Vagina (tissue), 2 donors: ENCODE measurements at regions of chr1 and their contacts with region 1.

Region 1: DNA sequence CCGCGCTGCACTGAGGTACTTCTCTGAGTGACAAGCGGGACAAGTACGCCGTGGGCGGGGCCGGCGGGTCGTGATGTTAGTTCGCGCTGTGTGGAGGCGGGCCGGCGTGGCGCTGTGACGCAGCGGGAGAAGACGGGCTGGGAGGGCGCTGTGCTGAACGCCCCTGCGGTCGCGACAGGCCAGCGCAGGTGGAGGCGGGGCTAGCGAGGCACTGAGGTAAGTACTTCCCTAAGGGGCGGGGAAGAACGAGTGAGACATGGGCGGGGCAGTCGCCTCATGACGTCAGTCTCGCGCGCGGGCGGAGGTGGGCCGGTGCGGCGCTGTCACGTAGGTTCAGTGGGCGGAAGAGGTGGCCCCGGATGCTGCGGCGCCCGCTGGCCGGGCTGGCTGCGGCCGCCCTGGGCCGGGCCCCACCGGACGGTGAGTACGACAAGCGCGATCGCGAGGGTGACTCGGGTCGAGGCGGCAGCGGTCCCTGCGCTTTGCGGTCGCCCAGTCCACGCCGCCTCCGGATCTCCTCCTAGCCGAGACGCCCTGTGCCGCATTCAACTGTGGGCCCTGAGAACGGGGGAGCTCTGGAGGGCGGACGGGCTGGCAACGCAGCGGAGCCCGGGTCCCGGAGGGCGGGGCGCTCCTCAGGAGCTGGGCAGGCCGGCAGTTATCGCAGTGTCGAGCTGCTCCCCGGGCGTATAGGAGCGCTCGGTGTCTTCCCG is at the start of gene GUK1:
- DNase-seq: peak; percentile 100
- H3K4me3 ChIP-seq: peak within 1 kb of the TSS; percentile 78 to 89
- H3K27ac ChIP-seq: peak within 1 kb of the TSS; percentile 96
- H3K4me1 ChIP-seq: peaks cover 46% of the 10 kb centered on the region
- H3K27me3 ChIP-seq: no peaks in the 10 kb centered on the region
- CTCF ChIP-seq: peak; percentile 26 to 32 (median 27)
- POLR2A ChIP-seq: peak; percentile 69 to 93
- total RNA-seq, gene GUK1: 299 TPM

Region 2: GRCh38 chr1:228165372-228166169 is 25.5 kb after region 1 on chr1 and contains the start of gene IBA57:
- intact Hi-C with region 1: loop called (anchors 2 kb)
- DNase-seq: peak in 1 of 2 donors; percentile 100
- H3K4me3 ChIP-seq: peak within 1 kb of the TSS; percentile 77 to 78
- H3K27ac ChIP-seq: peak within 1 kb of the TSS; percentile 99
- H3K4me1 ChIP-seq: peaks cover 50% of the 10 kb centered on the region
- H3K27me3 ChIP-seq: no peaks in the 10 kb centered on the region
- CTCF ChIP-seq: peak; percentile 65 to 90 (median 86)
- POLR2A ChIP-seq: peak in 1 of 2 donors; percentile 86
- total RNA-seq, gene IBA57: 3.4 TPM

Region 3: DNA sequence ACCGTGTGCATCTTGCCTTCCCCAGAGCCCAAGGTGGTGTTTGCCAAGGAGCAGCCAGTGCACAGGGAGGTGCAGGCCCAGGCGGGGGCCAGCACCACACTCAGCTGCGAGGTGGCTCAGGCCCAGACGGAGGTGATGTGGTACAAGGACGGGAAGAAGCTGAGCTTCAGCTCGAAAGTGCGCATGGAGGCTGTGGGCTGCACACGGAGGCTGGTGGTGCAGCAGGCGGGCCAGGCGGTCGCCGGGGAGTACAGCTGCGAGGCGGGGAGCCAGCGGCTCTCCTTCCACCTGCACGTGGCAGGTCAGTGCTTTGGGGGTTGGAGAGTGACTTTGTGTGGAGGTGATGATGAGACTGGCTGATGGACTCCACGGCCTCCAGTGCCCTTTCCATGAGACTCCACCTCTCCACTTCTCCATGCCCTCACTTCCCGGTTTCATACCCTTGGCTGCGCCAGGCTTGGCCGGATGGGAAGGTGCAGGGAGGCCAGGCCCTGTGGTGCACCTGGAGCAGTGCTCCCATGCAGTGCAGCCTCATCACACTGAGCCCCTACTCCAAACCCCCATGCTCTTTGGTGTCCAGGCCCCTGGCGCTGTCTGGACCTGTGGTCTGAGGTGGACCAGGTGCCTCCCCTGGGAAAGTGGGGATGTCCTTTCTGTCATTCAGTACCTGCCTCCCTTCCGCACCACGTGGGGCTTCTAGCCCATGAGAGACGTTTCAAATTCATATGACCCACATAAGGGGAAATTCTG is 116.7 kb after region 1 on chr1:
- intact Hi-C with region 1: no loop called
- DNase-seq: no peak
- H3K4me3 ChIP-seq: no peak overlapping the region
- H3K27ac ChIP-seq: no peak overlapping the region
- H3K4me1 ChIP-seq: no peaks in the 10 kb centered on the region
- H3K27me3 ChIP-seq: no peaks in the 10 kb centered on the region
- CTCF ChIP-seq: no peak
- POLR2A ChIP-seq: no peak

Region 4: GRCh38 chr1:228344631-228345072 is 204.6 kb after region 1 on chr1:
- intact Hi-C with region 1: no loop called
- DNase-seq: no peak
- H3K4me3 ChIP-seq: no peak overlapping the region
- H3K27ac ChIP-seq: no peak overlapping the region
- H3K4me1 ChIP-seq: no peaks in the 10 kb centered on the region
- H3K27me3 ChIP-seq: no peaks in the 10 kb centered on the region
- CTCF ChIP-seq: no peak
- POLR2A ChIP-seq: no peak

Region 5: GRCh38 chr1:228405987-228406265 is 265.8 kb after region 1 on chr1:
- intact Hi-C with region 1: loop called (anchors 5 kb)
- DNase-seq: no peak
- H3K4me3 ChIP-seq: peak overlapping the region; percentile 75 to 86
- H3K27ac ChIP-seq: peak overlapping the region; percentile 87
- H3K4me1 ChIP-seq: peaks cover 60% of the 10 kb centered on the region
- H3K27me3 ChIP-seq: no peaks in the 10 kb centered on the region
- CTCF ChIP-seq: no peak
- POLR2A ChIP-seq: no peak

Region 6: DNA sequence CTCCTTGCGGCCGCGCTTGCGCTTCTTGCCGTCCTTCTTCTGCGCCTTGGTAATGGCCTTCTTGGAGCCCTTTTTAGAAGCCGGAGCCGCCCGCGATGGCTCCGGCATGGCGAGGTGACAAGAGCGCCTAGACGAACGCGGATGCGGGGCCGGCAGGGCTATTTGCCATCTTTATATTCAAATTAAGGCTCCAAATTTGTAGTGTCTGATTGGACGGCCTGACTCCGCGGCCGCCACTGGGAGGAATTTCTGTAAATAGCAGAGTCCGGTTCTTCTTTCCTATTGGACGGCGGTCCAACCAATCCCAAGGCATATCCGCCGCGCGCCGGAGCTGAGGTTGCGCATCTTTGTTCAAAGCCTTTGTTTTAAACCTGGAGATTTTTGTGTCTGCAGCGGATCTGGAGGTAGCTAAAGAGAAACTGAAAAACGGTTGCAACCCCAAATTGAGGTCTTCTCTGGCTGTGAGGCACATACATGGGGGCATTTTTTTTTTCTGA is 324.4 kb after region 1 on chr1:
- intact Hi-C with region 1: no loop called
- DNase-seq: no peak
- H3K4me3 ChIP-seq: peak overlapping the region in 1 of 2 donors; percentile 26
- H3K27ac ChIP-seq: no peak overlapping the region
- H3K4me1 ChIP-seq: peaks cover 21% of the 10 kb centered on the region
- H3K27me3 ChIP-seq: no peaks in the 10 kb centered on the region
- CTCF ChIP-seq: no peak
- POLR2A ChIP-seq: no peak

Region 7: GRCh38 chr1:228486596-228487335 is 346.7 kb after region 1 on chr1:
- intact Hi-C with region 1: loop called (anchors 10 kb)
- DNase-seq: no peak
- H3K4me3 ChIP-seq: peak overlapping the region; percentile 95 to 98
- H3K27ac ChIP-seq: peak overlapping the region; percentile 99
- H3K4me1 ChIP-seq: peaks cover 53% of the 10 kb centered on the region
- H3K27me3 ChIP-seq: no peaks in the 10 kb centered on the region
- CTCF ChIP-seq: peak in 1 of 3 experiments; percentile 15
- POLR2A ChIP-seq: peak in 1 of 2 donors; percentile 15